Gastrocnemius medialis (tissue), 4 donors: ENCODE measurements at regions of chr18 and their contacts with region 1.

Region 1: GRCh38 chr18:57630002-57630753 is 8.5 kb upstream of the NARS1 start:
- DNase-seq: peak; percentile 95
- ATAC-seq: peak; percentile 99 to 100
- H3K4me3 ChIP-seq: peak overlapping the region; percentile 60 to 75 (median 68)
- H3K27ac ChIP-seq: peak overlapping the region; percentile 71 to 86 (median 78)
- H3K4me1 ChIP-seq: peaks cover 0 to 2% of the 10 kb centered on the region in 2 donors
- H3K27me3 ChIP-seq: no peaks in the 10 kb centered on the region
- CTCF ChIP-seq: peak; percentile 60 to 82 (median 62)
- POLR2A ChIP-seq: peak in 1 of 2 donors; percentile 12

Region 2: DNA sequence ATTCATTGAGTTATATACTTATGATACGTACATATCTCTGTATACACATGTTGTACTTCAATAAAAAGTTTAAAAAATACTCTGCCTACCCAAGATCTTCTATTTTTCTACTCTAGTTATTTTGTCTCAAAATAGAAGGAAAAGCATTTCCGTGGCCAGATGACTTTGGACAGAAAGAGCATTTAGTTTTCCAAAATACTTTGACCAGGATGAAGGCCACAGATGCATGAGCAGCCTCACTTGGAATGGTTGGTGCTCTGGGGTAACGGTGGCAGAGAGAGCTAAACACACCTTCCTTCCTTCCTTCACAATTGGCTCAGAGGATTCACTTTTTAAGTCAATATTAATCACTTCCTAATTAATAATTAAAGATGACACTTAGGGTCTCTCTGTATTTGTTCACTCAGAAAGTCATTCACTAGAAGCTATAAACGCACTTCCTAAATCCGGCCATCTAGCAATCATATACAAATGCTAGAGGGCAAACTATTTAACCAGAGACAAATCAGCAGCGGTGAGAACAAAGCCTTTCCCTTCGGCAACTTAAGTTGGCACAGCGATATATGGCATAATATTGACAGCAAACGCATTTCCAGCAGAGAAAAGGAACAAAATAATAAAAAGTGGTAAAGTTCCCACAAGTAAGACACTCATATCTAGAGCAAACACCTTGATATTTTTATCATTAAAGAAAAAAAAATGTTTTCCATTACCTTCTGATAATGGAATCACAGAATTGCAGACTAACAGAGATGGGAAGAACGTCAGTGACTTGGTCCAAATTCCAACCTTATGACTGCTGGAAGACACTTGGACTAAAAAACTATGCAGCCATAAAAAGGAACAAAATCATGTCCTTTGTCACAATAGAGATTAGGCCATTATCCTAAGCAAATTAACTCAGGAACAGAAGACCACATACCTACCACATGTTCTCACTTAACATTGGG is 47.4 kb after region 1 on chr18:
- in situ Hi-C with region 1: no loop called
- intact Hi-C with region 1: no loop called
- DNase-seq: no peak
- ATAC-seq: no peak
- H3K4me3 ChIP-seq: no peak overlapping the region
- H3K27ac ChIP-seq: no peak overlapping the region
- H3K4me1 ChIP-seq: no peaks in the 10 kb centered on the region
- H3K27me3 ChIP-seq: no peaks in the 10 kb centered on the region
- CTCF ChIP-seq: no peak
- POLR2A ChIP-seq: no peak

Region 3: DNA sequence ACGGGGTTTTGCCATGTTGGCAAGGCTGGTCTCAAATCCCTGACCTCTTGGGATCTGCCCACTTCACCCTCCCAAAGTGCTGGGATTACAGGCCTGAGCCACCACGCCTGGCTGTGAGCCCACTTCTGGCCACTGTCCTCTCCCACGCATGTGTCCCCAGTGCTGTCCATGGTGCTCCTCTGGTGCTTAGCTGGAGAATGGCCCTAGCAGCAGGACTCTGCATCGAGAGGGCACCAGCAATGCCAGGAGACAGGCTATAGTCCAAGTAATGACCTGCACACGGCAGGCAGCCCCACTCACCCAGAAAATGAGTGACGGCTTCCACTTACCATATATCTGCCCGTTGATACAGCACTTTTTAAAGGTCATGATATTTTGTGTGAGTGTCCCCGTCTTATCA is 57.8 kb after region 1 on chr18:
- in situ Hi-C with region 1: no loop called
- intact Hi-C with region 1: no loop called
- DNase-seq: no peak
- ATAC-seq: no peak
- H3K4me3 ChIP-seq: no peak overlapping the region
- H3K27ac ChIP-seq: no peak overlapping the region
- H3K4me1 ChIP-seq: no peaks in the 10 kb centered on the region
- H3K27me3 ChIP-seq: no peaks in the 10 kb centered on the region
- CTCF ChIP-seq: no peak
- POLR2A ChIP-seq: no peak

Region 4: GRCh38 chr18:57737400-57738060 is 107.4 kb after region 1 on chr18:
- in situ Hi-C with region 1: no loop called
- intact Hi-C with region 1: no loop called
- DNase-seq: peak; percentile 39 to 61
- ATAC-seq: peak; percentile 47 to 70
- H3K4me3 ChIP-seq: no peak overlapping the region
- H3K27ac ChIP-seq: no peak overlapping the region
- H3K4me1 ChIP-seq: no peaks in the 10 kb centered on the region
- H3K27me3 ChIP-seq: no peaks in the 10 kb centered on the region
- CTCF ChIP-seq: no peak
- POLR2A ChIP-seq: no peak

Region 5: DNA sequence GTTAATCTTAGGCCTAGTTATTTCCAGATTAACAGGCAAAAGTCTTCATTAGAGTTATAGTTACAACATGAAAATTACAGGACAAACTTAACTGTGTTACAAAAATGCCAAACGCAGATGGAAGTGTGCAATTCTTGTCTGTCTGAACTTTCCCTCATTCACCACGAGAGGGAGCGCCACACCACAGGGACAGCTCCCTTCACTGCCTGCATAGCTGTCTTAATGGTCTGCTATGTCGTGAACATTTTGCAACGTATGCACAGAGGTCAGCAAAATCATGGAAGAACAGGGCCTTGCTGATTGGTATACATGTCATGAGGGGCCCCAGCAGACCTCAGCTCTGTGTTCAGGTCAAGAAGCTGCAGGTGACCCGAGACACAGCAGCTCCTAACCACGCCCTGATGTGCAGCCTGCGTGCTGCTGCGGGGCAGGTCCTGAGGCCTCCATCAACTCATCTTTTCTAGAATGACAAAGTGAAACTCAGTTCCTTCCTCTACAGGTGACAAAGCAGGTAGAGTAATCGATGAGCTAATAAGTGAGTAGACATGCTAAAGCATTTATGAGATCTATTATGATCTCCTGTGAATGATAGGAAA is 251.7 kb after region 1 on chr18:
- in situ Hi-C with region 1: no loop called
- intact Hi-C with region 1: loop called (anchors 10 kb)
- DNase-seq: peak; percentile 16 to 18
- ATAC-seq: peak; percentile 74 to 78
- H3K4me3 ChIP-seq: no peak overlapping the region
- H3K27ac ChIP-seq: no peak overlapping the region
- H3K4me1 ChIP-seq: no peaks in the 10 kb centered on the region
- H3K27me3 ChIP-seq: no peaks in the 10 kb centered on the region
- CTCF ChIP-seq: peak; percentile 67 to 83 (median 72)
- POLR2A ChIP-seq: no peak

Region 6: DNA sequence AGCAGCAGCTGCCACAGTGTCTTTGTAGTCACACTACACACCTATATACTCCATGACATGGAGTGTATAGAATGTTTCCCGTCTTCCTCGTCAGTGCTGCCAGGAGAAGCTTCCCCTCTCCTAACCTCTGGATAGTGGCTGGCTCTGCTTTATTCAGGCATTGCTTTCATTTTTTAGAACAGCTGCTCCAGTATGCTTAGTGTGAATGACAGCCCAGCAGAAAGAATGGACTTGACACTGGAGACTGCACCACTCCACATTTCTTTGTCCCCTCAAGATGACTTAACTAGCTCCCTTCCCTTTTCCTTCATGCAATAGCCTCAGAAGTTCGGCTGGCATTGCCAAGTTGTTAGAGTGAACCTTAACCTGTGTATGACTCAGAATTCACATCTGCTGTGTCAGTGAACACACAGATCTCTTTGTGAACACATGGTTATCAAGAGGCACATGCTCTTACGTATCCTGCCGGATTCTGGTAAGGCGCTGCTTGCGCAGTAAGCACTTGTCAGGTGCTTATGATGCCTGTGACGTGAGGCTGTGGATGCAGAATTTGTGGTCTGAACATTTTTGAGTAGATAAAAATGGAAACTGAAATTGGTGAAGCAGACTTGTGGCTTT is 487.7 kb after region 1 on chr18:
- in situ Hi-C with region 1: loop called in 3 of 4 experiments (anchors 25 kb)
- intact Hi-C with region 1: loop called (anchors 5 kb)
- DNase-seq: no peak
- ATAC-seq: no peak
- H3K4me3 ChIP-seq: no peak overlapping the region
- H3K27ac ChIP-seq: no peak overlapping the region
- H3K4me1 ChIP-seq: no peaks in the 10 kb centered on the region
- H3K27me3 ChIP-seq: no peaks in the 10 kb centered on the region
- CTCF ChIP-seq: no peak
- POLR2A ChIP-seq: no peak

Region 7: DNA sequence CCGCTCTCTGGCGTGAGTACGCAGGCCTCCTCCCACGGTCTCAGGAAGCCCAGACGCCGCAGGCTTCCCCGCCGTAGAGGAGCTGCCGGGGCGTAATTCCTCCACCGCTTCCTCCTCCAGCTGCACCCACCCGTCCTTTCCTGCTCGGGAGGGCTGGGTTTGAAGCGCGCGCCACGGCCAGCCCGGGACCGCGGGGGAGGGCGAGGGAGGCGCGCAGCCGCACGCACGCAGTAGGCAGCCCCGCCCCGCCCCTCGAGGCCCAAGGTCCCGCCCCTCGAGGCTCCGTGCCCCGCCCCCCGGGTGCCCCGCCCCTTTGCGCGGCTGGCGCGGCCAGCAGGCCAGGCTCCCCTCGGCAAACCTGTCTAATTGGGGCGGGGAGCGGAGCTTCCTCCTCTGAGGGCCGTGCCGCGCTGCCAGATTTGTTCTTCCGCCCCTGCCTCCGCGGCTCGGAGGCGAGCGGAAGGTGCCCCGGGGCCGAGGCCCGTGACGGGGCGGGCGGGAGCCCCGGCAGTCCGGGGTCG is 1041.0 kb after region 1 on chr18 and contains the start of gene MALT1:
- in situ Hi-C with region 1: no loop called
- intact Hi-C with region 1: loop called (anchors 5 kb)
- DNase-seq: peak; percentile 88 to 89
- ATAC-seq: peak; percentile 92 to 95
- H3K4me3 ChIP-seq: peak within 1 kb of the TSS; percentile 58 to 68 (median 66)
- H3K27ac ChIP-seq: peak within 1 kb of the TSS; percentile 86 to 96 (median 94)
- H3K4me1 ChIP-seq: peaks cover 15 to 22% of the 10 kb centered on the region in 2 donors
- H3K27me3 ChIP-seq: no peaks in the 10 kb centered on the region
- CTCF ChIP-seq: no peak
- POLR2A ChIP-seq: peak; percentile 90 to 95
- total RNA-seq, gene MALT1: 9.9 to 24.8 (median 12.9) TPM